Gastrocnemius medialis (tissue), 4 donors: ENCODE measurements at regions of chr3 and their contacts with region 1.

Region 1: GRCh38 chr3:44761424-44762169 is at the starts of genes KIAA1143 and KIF15:
- DNase-seq: peak; percentile 90 to 93
- ATAC-seq: peak; percentile 100
- H3K4me3 ChIP-seq: peak within 1 kb of the TSS; percentile 60 to 100 (median 74)
- H3K27ac ChIP-seq: peak within 1 kb of the TSS; percentile 77 to 91 (median 88)
- H3K4me1 ChIP-seq: peaks cover 11 to 12% of the 10 kb centered on the region in 2 donors
- H3K27me3 ChIP-seq: no peaks in the 10 kb centered on the region
- CTCF ChIP-seq: no peak
- POLR2A ChIP-seq: peak; percentile 59 to 76
- total RNA-seq, gene KIAA1143: 28.5 to 36.2 (median 31.4) TPM
- total RNA-seq, gene KIF15: 0.25 to 1.6 (median 0.38) TPM

Region 2: DNA sequence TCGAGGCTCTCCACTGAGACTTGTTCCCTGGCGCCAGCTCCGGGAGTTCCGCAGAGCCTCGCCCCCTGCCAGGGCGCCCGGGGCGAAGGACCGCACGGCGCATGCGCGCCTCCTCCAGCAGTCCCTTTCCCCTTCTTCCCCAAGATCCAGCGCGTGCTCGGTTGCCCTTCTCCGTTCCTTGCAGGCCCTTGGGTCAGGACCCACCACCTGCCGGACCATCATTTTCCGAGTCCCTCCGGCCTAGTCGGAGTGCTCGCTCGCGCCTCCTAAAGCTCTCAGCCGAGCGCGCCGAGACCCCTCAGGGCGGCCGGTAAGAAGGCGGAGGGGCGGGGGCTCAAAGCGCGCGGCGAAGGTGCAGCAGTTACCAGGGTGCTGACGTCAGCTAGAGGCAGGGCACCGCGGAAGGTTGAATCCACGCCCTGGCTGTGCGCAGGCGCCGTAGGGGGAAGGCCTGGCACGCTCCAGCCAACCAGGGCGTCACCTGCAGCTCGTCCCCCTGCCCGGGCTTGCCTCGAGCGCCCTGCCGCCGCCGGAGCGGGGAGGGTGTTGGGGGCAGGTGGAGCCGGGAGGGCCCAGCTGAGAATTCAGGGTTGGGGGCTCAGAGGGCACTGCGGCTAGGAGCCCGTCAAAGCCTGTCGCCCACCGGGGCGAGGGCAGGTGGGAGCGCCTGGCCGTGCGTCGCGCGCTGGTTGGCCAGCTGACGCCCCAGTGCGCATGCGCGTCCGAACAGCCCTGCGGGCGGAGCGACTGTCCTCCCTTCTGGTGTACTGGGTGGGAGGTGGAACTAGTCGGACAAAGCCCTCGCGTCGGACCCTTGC is 423.4 kb before region 1 on chr3 and contains the start of gene TCAIM:
- in situ Hi-C with region 1: no loop called
- intact Hi-C with region 1: loop called (anchors 5 kb)
- DNase-seq: peak; percentile 95 to 97
- ATAC-seq: peak; percentile 95 to 97
- H3K4me3 ChIP-seq: peak within 1 kb of the TSS; percentile 77 to 95 (median 86)
- H3K27ac ChIP-seq: peak within 1 kb of the TSS; percentile 91 to 99 (median 98)
- H3K4me1 ChIP-seq: peaks cover 26 to 34% of the 10 kb centered on the region in 2 donors
- H3K27me3 ChIP-seq: no peaks in the 10 kb centered on the region
- CTCF ChIP-seq: no peak
- POLR2A ChIP-seq: peak; percentile 86 to 93
- total RNA-seq, gene TCAIM: 15.5 to 26.9 (median 22.7) TPM

Region 3: DNA sequence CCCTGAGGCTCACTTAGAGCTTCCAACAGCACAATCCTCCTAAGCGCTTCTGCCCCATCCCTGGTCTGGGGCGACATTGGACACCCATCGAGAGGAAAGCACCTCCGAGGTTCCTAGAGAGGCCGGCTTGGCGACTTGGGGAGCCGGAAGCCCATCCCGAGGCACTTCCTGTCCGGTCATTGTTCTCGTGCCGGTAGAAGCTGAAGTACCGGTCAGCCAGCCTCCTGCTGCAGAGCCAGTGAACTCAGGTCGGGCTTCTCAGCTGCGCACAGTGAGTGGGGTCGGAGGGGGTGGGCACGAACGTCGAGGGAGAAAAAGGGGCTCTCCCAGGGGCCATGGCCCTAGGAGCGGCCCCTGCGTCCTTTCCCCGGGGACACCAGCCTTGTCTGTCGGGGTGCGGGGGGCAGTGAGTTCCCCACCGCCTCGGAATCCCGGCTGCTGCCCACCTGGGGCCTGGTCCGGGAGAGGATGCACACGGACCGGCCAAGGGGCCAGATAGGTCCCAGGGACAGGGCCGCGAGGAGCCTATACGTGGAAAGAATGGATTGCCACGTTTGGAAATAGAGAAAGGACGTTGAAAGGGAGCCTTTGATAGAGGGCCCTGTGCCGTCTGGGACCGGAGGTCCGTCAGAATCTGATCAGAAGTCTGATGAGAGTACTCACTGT is 112.9 kb before region 1 on chr3 and contains the start of gene ZNF35:
- in situ Hi-C with region 1: no loop called
- intact Hi-C with region 1: loop called (anchors 2 kb)
- DNase-seq: peak; percentile 38 to 57
- ATAC-seq: peak; percentile 77 to 93
- H3K4me3 ChIP-seq: peak within 1 kb of the TSS; percentile 77 to 92 (median 84)
- H3K27ac ChIP-seq: peak within 1 kb of the TSS; percentile 64 to 78 (median 70)
- H3K4me1 ChIP-seq: peaks cover 7 to 17% of the 10 kb centered on the region in 2 donors
- H3K27me3 ChIP-seq: no peaks in the 10 kb centered on the region
- CTCF ChIP-seq: no peak
- POLR2A ChIP-seq: no peak
- total RNA-seq, gene ZNF35: 2.6 to 8.1 (median 5.3) TPM

Region 4: GRCh38 chr3:44729384-44729910 is 32.1 kb before region 1 on chr3 and contains the start of gene ZNF501:
- in situ Hi-C with region 1: no loop called
- intact Hi-C with region 1: loop called (anchors 1 kb)
- DNase-seq: peak; percentile 88 to 92
- ATAC-seq: peak; percentile 98 to 100
- H3K4me3 ChIP-seq: peak within 1 kb of the TSS; percentile 71 to 90 (median 82)
- H3K27ac ChIP-seq: peak within 1 kb of the TSS; percentile 55 to 76 (median 65)
- H3K4me1 ChIP-seq: peaks cover 9 to 13% of the 10 kb centered on the region in 2 donors
- H3K27me3 ChIP-seq: no peaks in the 10 kb centered on the region
- CTCF ChIP-seq: no peak
- POLR2A ChIP-seq: peak in 1 of 2 donors; percentile 32
- total RNA-seq, gene ZNF501: 0.92 to 4.7 (median 1.4) TPM

Region 5: DNA sequence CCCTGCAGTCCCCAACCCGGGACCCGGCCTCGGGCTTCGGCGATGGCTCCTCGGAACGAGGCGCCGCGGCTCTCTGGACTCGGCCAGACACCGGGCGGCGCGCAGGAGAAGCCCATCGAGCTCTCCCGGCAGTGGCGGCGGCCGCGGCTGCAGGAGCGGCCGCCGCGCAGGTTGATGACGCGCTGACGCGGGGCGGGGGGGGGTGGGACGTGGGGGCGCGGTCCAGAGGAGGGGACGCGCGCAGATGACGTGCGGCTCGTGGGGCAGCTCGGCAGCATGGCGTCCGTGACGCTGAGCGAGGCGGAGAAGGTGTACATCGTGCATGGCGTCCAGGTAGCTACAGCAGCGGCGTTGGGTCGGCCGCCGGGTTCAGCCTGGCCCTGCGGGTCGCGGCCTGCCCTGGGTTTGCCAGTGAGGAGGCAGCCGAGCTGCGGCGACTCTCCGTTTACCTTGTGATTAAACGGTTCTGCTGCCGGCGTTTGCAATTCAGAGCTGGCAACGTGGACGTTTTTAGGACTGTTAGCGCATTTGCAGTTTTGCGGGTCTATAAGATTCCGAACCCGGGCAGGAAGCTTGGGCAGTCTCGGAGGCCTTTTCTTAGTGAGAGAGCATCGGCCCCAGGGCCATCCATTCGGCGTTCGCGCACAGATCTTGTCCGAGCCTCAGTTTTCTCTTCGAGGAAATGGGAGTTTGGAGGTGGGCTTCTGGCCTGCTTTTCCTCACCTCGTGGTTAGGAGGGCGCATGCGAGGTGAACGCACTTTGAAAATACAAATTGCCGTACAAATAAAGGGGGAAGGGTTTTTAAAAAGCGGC is 214.6 kb after region 1 on chr3 and contains the starts of genes EXOSC7 and ZDHHC3:
- in situ Hi-C with region 1: loop called in 1 of 4 experiments (anchors 10 kb)
- intact Hi-C with region 1: loop called (anchors 2 kb)
- DNase-seq: peak; percentile 77 to 81
- ATAC-seq: peak; percentile 83 to 87
- H3K4me3 ChIP-seq: peak within 1 kb of the TSS; percentile 88 to 99 (median 94)
- H3K27ac ChIP-seq: peak within 1 kb of the TSS; percentile 91 to 97 (median 94)
- H3K4me1 ChIP-seq: peaks cover 38 to 43% of the 10 kb centered on the region in 2 donors
- H3K27me3 ChIP-seq: no peaks in the 10 kb centered on the region
- CTCF ChIP-seq: no peak
- POLR2A ChIP-seq: peak; percentile 62 to 75
- total RNA-seq, gene EXOSC7: 57.4 to 80.3 (median 60.9) TPM
- total RNA-seq, gene ZDHHC3: 66.2 to 90.5 (median 74.5) TPM